ENCODE measurements at regions of chr16 and their contacts with region 1.

Region 1: GRCh38 chr16:10509534-10510025 is 70.8 kb downstream of the EMP2 start:
- DNase-seq: peak; percentile 76 to 80
- H3K4me3 ChIP-seq: no peak overlapping the region
- H3K4me3 Mint-ChIP-seq: no peak overlapping the region
- H3K27ac Mint-ChIP-seq: no peak overlapping the region
- H3K4me1 ChIP-seq: 0 out of 2 replicates have a peak, but pooled peaks cover 6% of the 10 kb centered on the region
- H3K4me1 Mint-ChIP-seq: peaks cover 4% of the 10 kb centered on the region
- H3K27me3 ChIP-seq: no peaks in the 10 kb centered on the region
- H3K27me3 Mint-ChIP-seq: no peaks in the 10 kb centered on the region
- CTCF ChIP-seq: peak; percentile 65 to 67

Region 2: DNA sequence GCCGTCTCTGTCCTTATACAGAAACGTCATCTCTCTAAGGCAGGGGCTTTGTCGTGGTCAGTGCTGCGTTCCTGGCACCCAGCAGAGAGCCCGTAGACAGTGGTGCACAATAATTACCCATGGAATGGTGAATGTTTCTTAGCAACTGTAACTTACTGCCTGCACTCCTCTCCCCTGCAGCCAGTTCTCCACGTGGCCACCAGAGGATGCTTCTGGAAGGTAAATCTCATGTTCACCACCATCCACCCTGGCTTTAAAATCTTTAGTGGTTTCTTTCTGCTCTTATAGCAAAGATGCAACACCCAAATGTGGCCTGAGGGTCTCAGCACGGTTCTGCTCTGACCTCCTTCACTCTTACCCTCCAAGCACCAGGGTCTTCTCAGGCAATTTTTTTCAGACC is 478.1 kb before region 1 on chr16:
- CTCF ChIA-PET with region 1: no interaction called
- POLR2A ChIA-PET with region 1: no interaction called
- intact Hi-C with region 1: loop called (anchors 5 kb)
- DNase-seq: peak in 1 of 2 experiments; percentile 9
- H3K4me3 ChIP-seq: no peak overlapping the region
- H3K4me3 Mint-ChIP-seq: no peak overlapping the region
- H3K27ac Mint-ChIP-seq: no peak overlapping the region
- H3K4me1 ChIP-seq: peaks cover 9% of the 10 kb centered on the region
- H3K4me1 Mint-ChIP-seq: peaks cover 10% of the 10 kb centered on the region
- H3K27me3 ChIP-seq: no peaks in the 10 kb centered on the region
- H3K27me3 Mint-ChIP-seq: no peaks in the 10 kb centered on the region
- CTCF ChIP-seq: peak in 1 of 2 experiments; percentile 21

Region 3: DNA sequence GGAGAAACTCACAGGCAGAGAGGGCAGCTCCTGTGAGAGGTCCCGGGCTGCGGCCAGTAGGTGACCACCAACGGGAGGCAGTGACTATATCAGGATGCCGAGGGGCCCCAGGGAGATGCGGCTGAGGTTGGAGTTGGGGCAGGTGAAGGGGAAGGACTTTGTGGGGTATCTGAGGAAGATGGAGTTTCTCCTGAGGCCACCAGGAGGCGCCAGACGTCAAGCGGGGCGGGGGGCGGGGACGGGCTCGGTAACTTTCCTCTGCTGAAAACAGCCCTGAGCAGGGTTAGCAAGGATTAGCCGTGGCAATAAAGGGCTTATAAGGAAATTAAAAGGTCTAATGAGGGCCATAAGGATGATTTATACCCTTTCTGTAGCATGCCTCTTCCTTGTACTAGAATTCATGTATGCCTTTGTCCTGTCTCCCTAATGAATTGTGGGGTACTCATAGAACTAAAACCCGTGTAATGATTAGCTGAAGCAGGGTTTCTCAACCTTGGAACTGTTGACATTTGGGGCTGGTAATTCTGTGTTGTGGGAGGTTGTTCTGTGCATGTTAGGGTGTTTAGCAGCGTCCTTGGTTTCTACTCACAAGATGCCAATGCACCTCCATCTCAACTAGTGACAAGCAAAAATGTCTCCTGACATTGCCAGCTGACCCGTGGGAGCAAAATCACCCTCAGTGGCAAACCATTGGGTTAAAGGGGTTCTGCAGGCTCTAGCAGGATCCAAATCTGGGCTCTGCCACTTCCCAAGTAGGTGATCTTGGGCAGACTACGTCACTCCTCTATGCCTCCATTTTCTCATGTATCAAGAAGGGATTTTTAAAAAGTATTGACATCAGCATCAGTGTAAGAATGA is 252.6 kb before region 1 on chr16:
- CTCF ChIA-PET with region 1: interaction called, 6 read pairs
- POLR2A ChIA-PET with region 1: no interaction called
- intact Hi-C with region 1: loop called (anchors 1 kb)
- DNase-seq: peak; percentile 35 to 39
- H3K4me3 ChIP-seq: no peak overlapping the region
- H3K4me3 Mint-ChIP-seq: no peak overlapping the region
- H3K27ac Mint-ChIP-seq: peak overlapping the region; percentile 67
- H3K4me1 ChIP-seq: peaks cover 12% of the 10 kb centered on the region
- H3K4me1 Mint-ChIP-seq: peaks cover 15% of the 10 kb centered on the region
- H3K27me3 ChIP-seq: no peaks in the 10 kb centered on the region
- H3K27me3 Mint-ChIP-seq: no peaks in the 10 kb centered on the region
- CTCF ChIP-seq: peak; percentile 65 to 71

Region 4: DNA sequence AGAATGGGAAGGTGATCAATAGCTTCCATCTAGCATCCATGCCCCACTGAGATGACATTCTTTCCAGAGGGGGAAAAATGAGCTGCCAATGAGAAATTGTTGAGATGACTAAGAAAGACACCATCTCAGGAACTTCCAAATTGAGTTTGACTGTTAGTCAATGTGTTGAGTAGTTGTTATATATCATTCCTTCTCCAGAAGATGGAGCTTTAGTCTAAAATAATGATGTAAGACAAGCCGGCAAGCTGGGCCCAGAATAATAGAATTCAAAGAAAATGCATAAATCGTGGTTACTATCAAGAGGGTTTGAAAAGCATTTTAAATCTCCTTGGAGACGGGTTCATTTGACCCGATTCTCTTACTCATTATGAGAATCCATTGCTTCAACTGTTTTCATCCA is 194.8 kb before region 1 on chr16:
- CTCF ChIA-PET with region 1: interaction called, 16 read pairs
- POLR2A ChIA-PET with region 1: no interaction called
- intact Hi-C with region 1: no loop called
- DNase-seq: no peak
- H3K4me3 ChIP-seq: no peak overlapping the region
- H3K4me3 Mint-ChIP-seq: no peak overlapping the region
- H3K27ac Mint-ChIP-seq: no peak overlapping the region
- H3K4me1 ChIP-seq: peaks cover 40% of the 10 kb centered on the region
- H3K4me1 Mint-ChIP-seq: peaks cover 28% of the 10 kb centered on the region
- H3K27me3 ChIP-seq: no peaks in the 10 kb centered on the region
- H3K27me3 Mint-ChIP-seq: no peaks in the 10 kb centered on the region
- CTCF ChIP-seq: peak; percentile 8 to 10

Region 5: DNA sequence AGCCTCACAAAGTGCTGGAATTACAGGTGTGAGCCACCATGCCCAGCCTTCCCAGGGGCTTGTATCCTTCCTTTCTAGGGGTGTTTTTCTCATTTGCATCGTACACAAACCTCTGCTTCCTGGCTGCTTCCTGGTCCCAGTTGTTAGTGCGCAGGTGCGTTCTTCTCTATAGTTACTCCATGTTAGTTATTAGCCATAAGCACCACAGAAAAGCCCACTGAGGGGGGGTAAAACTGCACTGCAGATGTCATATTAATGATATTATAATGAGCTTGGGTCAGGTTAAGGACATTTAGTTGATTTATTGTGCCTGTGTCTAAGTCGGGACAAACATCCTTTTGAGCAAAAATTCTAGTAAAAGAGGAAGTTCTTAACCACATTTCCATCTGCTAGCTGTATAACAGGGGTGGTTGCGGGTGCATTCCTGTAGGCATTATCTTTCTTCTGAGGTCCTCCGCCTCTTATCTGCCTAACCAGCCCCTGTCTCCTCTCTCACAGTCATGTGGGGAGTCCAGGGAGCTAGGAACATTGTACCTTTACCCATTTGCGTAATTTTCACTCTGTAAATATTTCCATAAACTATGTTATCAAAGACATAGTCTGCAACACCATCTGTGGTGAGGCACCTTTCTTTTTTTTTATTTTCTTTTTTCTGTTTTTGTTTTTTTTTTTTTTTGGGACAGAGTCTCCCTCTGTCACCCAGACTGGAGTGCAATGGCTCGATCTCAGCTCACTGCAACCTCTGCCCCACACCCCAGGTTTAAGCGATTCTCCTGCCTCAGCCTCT is 147.3 kb before region 1 on chr16:
- CTCF ChIA-PET with region 1: no interaction called
- POLR2A ChIA-PET with region 1: no interaction called
- intact Hi-C with region 1: loop called (anchors 5 kb)
- DNase-seq: peak; percentile 71 to 82
- H3K4me3 ChIP-seq: no peak overlapping the region
- H3K4me3 Mint-ChIP-seq: no peak overlapping the region
- H3K27ac Mint-ChIP-seq: no peak overlapping the region
- H3K4me1 ChIP-seq: peaks cover 22% of the 10 kb centered on the region
- H3K4me1 Mint-ChIP-seq: no peaks in the 10 kb centered on the region
- H3K27me3 ChIP-seq: no peaks in the 10 kb centered on the region
- H3K27me3 Mint-ChIP-seq: no peaks in the 10 kb centered on the region
- CTCF ChIP-seq: no peak

Region 6: GRCh38 chr16:10737068-10737625 is 227.6 kb after region 1 on chr16:
- CTCF ChIA-PET with region 1: interaction called, 29 read pairs
- POLR2A ChIA-PET with region 1: no interaction called
- intact Hi-C with region 1: loop called (anchors 1 kb)
- DNase-seq: peak; percentile 61 to 76
- H3K4me3 ChIP-seq: no peak overlapping the region
- H3K4me3 Mint-ChIP-seq: no peak overlapping the region
- H3K27ac Mint-ChIP-seq: no peak overlapping the region
- H3K4me1 ChIP-seq: peaks cover 18% of the 10 kb centered on the region
- H3K4me1 Mint-ChIP-seq: no peaks in the 10 kb centered on the region
- H3K27me3 ChIP-seq: no peaks in the 10 kb centered on the region
- H3K27me3 Mint-ChIP-seq: no peaks in the 10 kb centered on the region
- CTCF ChIP-seq: peak; percentile 84 to 94

Region 7: DNA sequence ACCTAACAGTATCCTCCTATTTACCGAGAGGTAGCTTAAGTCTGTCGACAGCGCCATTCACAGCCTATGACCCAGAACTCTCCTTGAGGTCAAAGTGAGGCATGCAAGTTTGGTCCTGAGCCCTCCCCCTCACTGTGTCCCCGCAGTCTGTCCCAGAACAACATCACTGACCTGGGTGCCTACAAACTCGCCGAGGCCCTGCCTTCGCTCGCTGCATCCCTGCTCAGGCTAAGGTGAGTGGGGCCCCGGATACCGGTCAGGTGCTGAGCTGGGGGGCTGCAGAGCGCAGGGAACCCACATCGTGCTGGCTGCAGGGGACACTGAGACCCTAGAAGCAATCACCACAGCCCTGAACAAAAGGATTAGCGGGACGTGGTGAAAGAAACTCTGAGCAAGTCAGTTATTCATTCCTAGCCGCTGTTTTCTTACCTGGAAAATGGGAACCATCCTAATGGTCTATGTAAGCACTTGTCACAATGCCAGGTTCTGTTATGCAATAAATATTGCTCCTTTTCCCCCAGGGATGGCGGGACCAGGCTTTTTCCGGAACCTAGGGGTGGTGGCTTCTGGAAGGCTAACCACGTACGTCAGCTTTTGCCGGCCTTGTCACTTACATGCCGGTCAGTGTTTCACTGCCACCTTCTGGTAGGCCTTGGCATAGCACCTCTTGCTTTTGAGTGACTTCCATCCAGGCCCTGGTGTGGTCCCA is 408.9 kb after region 1 on chr16:
- CTCF ChIA-PET with region 1: interaction called, 4 read pairs
- POLR2A ChIA-PET with region 1: no interaction called
- intact Hi-C with region 1: loop called (anchors 2 kb)
- DNase-seq: peak; percentile 91
- H3K4me3 ChIP-seq: no peak overlapping the region
- H3K4me3 Mint-ChIP-seq: no peak overlapping the region
- H3K27ac Mint-ChIP-seq: no peak overlapping the region
- H3K4me1 ChIP-seq: peaks cover 28% of the 10 kb centered on the region
- H3K4me1 Mint-ChIP-seq: peaks cover 7% of the 10 kb centered on the region
- H3K27me3 ChIP-seq: no peaks in the 10 kb centered on the region
- H3K27me3 Mint-ChIP-seq: no peaks in the 10 kb centered on the region
- CTCF ChIP-seq: peak; percentile 84 to 92